HepG2 (cell line): ENCODE measurements at regions of chrX and their contacts with region 1.

Region 1: GRCh38 chrX:40153335-40154249 is 55.8 kb upstream of the BCOR start:
- DNase-seq: no peak
- ATAC-seq: no peak
- H3K4me3 ChIP-seq: peak overlapping the region in 2 of 3 experiments; percentile 33 to 58; a peak in 2 of 6 replicates
- H3K27ac ChIP-seq: peak overlapping the region; percentile 95
- H3K4me1 ChIP-seq: peaks cover 43% of the 10 kb centered on the region
- H3K27me3 ChIP-seq: no peaks in the 10 kb centered on the region
- CTCF ChIP-seq: no peak
- EP300 ChIP-seq: no peak
- POLR2A ChIP-seq: no peak
- RAD21 ChIP-seq: no peak

Region 2: DNA sequence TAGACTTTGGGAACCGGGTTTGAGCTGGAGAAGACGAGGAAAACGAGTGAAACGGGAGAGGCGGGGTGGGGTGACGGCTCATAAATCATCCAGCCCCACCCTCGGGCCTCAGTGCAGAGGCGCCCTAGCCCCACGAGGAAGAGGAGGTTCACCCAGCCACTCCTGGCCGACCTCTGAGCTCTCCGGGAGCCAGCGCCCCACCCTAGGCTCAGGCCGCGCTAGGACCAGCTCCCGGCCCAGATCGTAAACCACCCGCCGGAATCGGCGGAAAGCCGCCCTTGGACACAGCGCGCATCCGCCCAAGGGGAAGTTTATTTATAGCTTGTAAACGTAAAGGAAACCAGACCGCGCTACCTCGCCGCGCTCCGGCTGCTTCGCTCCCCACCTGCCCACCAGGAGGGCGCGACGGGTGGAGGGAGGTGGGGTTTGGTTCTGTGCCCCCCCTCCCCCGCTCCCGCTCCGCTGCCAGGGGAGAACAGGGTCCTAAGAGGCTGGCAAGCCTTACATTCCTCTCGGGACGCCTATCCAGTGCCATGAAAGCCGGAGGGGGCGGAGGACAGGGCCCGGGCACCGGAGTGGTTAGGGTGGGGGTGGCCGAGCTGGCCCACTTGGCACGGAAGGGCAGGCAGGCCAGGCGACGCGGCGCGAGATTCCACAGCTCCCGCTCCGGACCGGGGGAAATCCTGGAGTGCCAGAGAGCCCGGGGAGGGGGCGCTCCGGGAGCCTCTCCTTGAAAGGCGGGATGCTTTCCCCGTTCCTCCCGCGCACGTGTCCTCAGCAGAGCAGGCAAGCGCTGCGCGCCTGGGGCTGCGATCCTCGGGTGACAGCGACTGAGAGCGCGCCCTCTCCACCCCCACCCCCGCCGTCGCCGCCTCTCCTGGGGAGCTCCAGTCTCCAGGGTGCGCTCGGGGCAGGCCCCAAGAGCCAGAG is 140.1 kb before region 1 on chrX:
- CTCF ChIA-PET with region 1: no interaction called
- POLR2A ChIA-PET with region 1: interaction called, 41 read pairs
- in situ Hi-C with region 1: loop called (anchors 5 kb)
- intact Hi-C with region 1: no loop called
- DNase-seq: peak; percentile 67
- ATAC-seq: peak; percentile 73
- H3K4me3 ChIP-seq: peak overlapping the region; percentile 59 to 77 (median 70); a peak in 5 of 6 replicates
- H3K27ac ChIP-seq: peak overlapping the region; percentile 98
- H3K4me1 ChIP-seq: peaks cover 27% of the 10 kb centered on the region
- H3K27me3 ChIP-seq: no peaks in the 10 kb centered on the region
- CTCF ChIP-seq: 0 out of 2 replicates have a peak, but pooled peaks have one; percentile 0
- EP300 ChIP-seq: no peak
- POLR2A ChIP-seq: no peak; a peak in 2 of 4 replicates
- RAD21 ChIP-seq: no peak; the same call in 1 of the 2 replicates

Region 3: GRCh38 chrX:40097497-40098263 is 55.9 kb before region 1 on chrX and contains the start of gene BCOR:
- CTCF ChIA-PET with region 1: no interaction called
- POLR2A ChIA-PET with region 1: interaction called, 38 read pairs
- in situ Hi-C with region 1: no loop called
- intact Hi-C with region 1: loop called (anchors 1 kb)
- DNase-seq: no peak
- ATAC-seq: peak; percentile 27
- H3K4me3 ChIP-seq: peak within 1 kb of the TSS; percentile 69 to 75 (median 73)
- H3K27ac ChIP-seq: peak within 1 kb of the TSS; percentile 73
- H3K4me1 ChIP-seq: peaks cover 39% of the 10 kb centered on the region
- H3K27me3 ChIP-seq: no peaks in the 10 kb centered on the region
- CTCF ChIP-seq: no peak
- EP300 ChIP-seq: no peak
- POLR2A ChIP-seq: peak in 1 of 2 experiments; percentile 89; a peak in 2 of 4 replicates
- RAD21 ChIP-seq: peak; percentile 39; the same call in 1 of the 2 replicates
- total RNA-seq, gene BCOR: 15.2 and 18.6 TPM in 2 replicates

Region 4: GRCh38 chrX:40140706-40141499 is 12.7 kb before region 1 on chrX:
- CTCF ChIA-PET with region 1: no interaction called
- POLR2A ChIA-PET with region 1: interaction called, 33 read pairs
- in situ Hi-C with region 1: no loop called
- intact Hi-C with region 1: no loop called
- DNase-seq: peak; percentile 56
- ATAC-seq: peak; percentile 82
- H3K4me3 ChIP-seq: peak overlapping the region in 1 of 3 experiments; percentile 43; a peak in 1 of 6 replicates
- H3K27ac ChIP-seq: peak overlapping the region; percentile 54
- H3K4me1 ChIP-seq: peaks cover 50% of the 10 kb centered on the region
- H3K27me3 ChIP-seq: no peaks in the 10 kb centered on the region
- CTCF ChIP-seq: no peak
- EP300 ChIP-seq: no peak
- POLR2A ChIP-seq: no peak
- RAD21 ChIP-seq: no peak

Region 5: DNA sequence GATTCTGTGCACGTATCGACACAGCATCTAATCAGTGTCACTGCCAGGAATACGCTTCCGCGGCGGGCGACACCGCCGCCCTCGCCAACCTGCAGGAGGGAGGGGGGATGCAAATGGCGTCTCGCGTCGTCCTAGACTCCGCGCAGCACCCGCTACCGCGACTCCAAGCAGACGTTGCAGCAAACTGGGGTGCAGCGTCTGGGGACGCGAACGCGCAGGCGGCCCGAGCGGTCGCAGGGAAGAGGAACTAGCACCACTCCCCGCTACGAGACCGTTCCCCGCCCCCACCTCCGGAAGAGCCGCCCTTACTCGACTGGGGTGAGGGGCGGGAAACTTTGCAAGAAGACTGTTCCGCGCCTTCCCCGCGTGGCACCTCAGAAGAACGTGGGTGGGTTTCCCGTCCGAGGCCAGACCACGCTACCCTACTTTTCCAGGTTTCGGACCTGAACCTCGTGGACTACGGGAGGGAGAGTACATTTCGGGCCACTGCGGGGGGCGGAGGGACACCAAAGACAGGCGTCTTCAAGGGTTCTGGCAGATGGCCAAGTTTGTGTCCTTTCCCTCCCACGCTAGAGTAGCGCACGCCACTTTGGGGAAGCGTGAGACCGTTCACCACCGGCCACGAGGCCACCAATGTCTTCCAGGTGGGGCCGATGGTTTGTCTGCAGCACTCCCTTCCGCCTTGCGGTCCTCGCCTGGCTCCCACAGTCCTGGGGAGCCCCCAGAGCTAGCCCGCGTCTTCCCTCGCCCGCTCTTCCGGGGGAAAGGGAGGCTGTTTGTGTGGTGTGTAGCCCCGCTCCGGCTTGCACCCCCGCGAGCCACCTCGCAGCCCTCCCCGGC is 22.1 kb after region 1 on chrX:
- CTCF ChIA-PET with region 1: no interaction called
- POLR2A ChIA-PET with region 1: interaction called, 41 read pairs
- in situ Hi-C with region 1: no loop called
- intact Hi-C with region 1: no loop called
- DNase-seq: peak; percentile 47
- ATAC-seq: peak; percentile 39
- H3K4me3 ChIP-seq: peak overlapping the region; percentile 55 to 74 (median 64); a peak in 5 of 6 replicates
- H3K27ac ChIP-seq: peak overlapping the region; percentile 95
- H3K4me1 ChIP-seq: peaks cover 46% of the 10 kb centered on the region
- H3K27me3 ChIP-seq: no peaks in the 10 kb centered on the region
- CTCF ChIP-seq: 0 out of 2 replicates have a peak, but pooled peaks have one; percentile 5
- EP300 ChIP-seq: no peak
- POLR2A ChIP-seq: peak in 1 of 2 experiments; percentile 19; a peak in 2 of 4 replicates
- RAD21 ChIP-seq: no peak

Region 6: DNA sequence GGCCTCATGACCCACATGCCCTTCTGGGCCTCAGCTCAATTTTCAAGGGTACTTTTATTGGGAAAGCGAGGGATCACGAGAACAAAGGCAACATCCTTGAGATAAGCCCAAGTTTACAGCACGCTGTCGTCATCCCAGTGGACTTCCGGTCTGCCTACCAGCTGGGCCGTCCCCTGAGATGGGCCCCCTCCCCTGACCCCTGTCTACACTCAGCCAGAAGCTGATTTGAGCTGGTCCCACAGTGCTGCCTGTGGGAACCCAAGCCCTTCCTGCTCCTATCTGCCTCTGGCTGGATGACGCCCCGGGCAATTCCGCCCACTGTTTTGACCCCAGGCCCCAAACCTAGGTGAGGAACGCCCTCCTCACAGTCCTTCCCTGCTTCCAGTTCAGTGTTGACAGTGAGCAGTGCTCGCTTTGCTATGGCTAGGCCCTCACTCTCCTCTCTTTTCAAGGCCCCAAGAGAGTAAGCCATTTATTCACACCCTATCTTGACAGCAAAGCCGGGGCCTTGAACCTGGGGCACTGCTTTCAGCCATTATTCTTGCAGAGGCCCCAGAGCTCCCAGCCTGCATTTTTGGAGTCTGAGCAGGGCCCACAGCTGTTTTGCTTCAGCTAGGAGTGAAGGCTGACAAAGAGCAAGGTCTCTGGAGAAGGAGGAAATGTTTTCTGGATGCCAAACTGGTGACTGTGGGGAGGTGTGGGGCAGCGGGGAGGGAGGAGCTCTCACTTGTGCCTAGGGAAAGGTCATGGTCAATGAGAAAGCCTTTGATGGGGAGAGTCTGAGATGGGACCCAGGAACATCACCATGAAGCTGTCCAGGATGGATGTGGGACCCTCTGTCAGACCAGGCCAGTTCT is 108.8 kb after region 1 on chrX:
- CTCF ChIA-PET with region 1: no interaction called
- POLR2A ChIA-PET with region 1: no interaction called
- in situ Hi-C with region 1: no loop called
- intact Hi-C with region 1: no loop called
- DNase-seq: peak; percentile 8
- ATAC-seq: no peak; the same call in 2 of the 3 replicates
- H3K4me3 ChIP-seq: no peak overlapping the region
- H3K27ac ChIP-seq: no peak overlapping the region
- H3K4me1 ChIP-seq: peaks cover 23% of the 10 kb centered on the region
- H3K27me3 ChIP-seq: no peaks in the 10 kb centered on the region
- CTCF ChIP-seq: no peak
- EP300 ChIP-seq: no peak
- POLR2A ChIP-seq: no peak
- RAD21 ChIP-seq: no peak